ENCODE measurements at regions of chr19 and their contacts with region 1.

Region 1: DNA sequence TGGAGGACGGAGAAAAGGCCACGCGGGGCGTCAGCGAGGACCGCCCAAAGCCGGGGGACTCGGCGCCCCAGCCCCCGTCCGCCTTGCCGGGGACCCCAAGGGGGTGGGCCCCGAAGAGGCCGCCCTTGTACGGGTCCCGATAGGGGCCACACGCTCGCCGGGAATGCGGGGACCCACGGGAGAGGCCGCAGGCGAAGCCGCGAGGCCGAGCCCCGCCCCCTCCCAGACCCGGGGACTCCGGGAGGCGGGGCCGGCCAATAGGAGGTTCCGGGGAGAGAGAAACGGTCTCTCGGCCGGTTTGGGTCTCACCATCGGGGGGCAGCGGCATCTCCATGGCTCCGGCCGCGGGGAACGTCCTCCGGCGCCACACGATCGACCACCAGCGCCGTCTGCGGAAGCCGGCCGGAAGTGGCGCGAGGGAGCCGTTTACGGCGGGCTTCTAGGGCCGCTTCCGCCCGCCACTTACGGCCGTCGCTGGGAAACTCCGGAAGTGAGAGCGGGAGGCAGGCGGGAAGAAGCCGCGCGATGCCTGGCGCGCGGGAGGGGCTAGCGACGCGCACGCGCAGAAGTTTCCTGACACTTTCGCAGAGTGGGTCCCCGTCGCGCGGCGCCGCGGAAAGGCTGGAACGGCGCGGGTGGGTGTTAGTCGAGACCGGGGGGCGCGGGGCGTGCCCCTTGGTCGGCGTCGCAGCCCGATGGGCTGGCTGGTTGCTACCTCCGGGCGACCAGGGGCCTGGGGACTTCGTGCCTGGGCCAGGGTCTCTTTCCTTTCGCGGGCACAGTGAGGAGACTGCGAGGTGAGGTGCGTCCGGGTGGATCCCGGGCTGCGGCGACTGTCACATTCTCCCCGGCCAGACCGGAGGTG is at the start of gene CHERP:
- H3K4me3 Mint-ChIP-seq: peak within 1 kb of the TSS; percentile 82
- H3K27ac Mint-ChIP-seq: peak within 1 kb of the TSS; percentile 80
- H3K4me1 Mint-ChIP-seq: peaks cover 52% of the 10 kb centered on the region
- H3K27me3 Mint-ChIP-seq: no peaks in the 10 kb centered on the region

Region 2: GRCh38 chr19:16446724-16447368 is 95.4 kb before region 1 on chr19:
- intact Hi-C with region 1: loop called (anchors 10 kb)
- H3K4me3 Mint-ChIP-seq: peak overlapping the region; percentile 13
- H3K27ac Mint-ChIP-seq: peak overlapping the region; percentile 84
- H3K4me1 Mint-ChIP-seq: peaks cover 85% of the 10 kb centered on the region
- H3K27me3 Mint-ChIP-seq: no peaks in the 10 kb centered on the region

Region 3: DNA sequence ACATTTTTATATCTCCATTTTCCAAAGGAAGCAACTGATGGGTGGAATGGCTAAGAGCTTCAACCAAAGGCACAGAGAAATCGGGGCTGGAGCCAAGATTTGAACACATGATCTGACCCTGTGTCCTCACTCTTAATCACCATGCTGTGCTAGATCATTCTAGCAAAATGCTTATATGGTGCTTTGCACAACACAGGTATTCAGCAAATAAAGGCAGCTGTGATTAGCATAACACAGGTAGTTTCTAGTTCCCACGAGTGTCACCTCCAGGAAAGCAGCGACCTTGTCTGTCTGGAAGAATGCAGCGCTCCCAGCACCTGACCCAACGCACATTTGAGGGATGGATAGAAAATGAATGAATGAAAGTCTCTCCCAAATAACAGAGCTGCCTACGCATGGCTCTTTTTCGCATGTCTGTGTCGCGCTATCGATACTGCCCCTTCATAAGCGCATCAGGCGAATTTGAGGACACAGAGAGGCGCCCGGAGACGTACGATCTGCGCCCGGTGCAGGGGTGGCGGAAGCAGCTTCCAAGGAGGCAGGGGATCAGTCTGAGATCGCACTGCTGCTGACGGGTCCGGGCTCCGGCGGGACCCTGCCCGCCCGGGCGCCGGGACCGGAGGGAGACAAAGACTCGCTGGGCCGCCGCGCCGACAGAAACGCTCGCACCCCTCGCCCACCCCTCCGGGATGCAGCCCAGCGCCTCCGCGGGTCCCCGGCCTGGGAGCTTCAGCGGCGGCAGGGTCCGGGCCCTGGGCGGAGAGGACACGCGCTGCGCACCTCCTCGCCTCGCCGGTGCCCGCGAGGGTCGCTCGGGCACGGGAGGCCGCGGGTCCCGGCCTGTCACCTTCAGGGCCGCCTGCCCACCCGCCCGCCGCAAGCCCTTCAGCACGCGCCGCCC is 71.1 kb before region 1 on chr19:
- intact Hi-C with region 1: loop called (anchors 2 kb)
- H3K4me3 Mint-ChIP-seq: peak overlapping the region; percentile 80
- H3K27ac Mint-ChIP-seq: peak overlapping the region; percentile 69
- H3K4me1 Mint-ChIP-seq: peaks cover 41% of the 10 kb centered on the region
- H3K27me3 Mint-ChIP-seq: no peaks in the 10 kb centered on the region

Region 4: DNA sequence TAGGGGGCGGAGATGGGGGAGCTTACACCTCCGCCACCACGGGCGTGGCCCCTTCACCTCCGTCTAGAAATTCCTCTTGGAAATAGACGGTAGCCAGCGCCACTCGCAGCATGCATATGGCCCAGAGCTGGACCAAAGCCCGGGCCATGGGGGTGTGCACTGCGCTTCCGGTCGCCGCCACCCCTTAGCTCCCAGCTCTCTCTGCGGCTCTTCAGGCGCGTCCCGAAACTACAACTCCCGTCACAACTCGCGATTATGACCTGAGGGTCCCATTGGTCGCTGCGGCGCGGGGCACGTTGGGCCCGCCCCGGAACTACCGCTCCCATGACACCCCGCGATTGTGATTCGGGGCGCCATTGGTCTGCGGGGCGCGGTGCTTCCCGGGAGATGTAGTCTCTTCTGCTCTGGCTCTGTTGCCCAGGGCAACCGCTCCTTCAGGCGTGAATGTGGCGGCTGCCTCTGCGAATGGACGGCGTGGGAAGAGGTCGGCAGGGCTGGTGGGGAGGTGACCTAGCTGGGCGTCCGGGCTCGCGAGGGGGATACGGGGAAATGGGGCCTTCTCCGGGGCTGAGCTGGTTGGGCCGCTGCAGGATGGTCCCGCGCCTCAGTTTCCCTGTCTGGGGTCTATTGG is 46.2 kb before region 1 on chr19 and contains the starts of genes C19orf44 and CALR3:
- intact Hi-C with region 1: loop called (anchors 1 kb)
- H3K4me3 Mint-ChIP-seq: peak within 1 kb of the TSS; percentile 94
- H3K27ac Mint-ChIP-seq: peak within 1 kb of the TSS; percentile 81
- H3K4me1 Mint-ChIP-seq: peaks cover 20% of the 10 kb centered on the region
- H3K27me3 Mint-ChIP-seq: no peaks in the 10 kb centered on the region

Region 5: DNA sequence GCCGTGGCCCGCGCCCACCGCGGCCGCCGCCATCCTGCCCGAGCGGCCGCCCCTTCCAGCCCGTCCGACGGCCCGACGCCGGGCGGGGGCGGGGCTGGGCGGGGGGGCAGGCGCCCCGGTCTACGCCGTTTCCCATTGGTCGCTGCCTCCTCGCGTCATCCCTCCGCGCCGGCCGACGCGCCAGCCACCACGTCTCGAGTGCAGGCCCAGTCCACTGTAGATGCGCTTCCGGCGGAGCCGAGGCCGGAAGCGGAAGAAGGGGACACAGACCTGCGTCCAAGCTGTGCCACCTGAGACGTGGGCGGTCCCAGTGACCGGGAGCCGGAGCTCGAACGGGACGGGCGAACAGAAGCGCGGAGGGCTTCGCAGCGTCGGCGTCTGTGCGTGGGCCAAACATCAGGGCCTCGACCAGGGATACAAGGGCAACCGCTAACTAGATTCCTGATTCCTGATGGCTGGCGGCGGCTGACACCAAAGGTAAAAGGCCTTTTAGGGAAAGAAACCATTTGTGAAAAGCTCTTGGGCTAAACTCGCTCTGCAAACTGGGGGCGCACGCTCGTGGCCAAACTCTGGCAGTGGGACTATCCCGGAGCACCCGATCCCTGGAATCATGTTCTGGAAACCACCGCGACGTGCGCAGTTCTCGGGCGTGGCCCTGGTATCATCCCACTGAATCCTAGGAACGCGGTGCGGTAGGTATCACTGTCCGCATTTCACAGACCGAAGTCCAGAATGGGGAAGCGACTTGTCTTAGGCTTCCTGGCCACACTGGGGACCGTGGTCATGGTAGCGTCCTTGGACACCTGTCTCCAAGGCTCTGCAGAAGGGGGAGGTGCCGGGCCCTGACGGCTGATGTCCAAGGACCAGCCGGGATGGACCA is 30.3 kb after region 1 on chr19 and contains the start of gene SLC35E1:
- intact Hi-C with region 1: loop called (anchors 1 kb)
- H3K4me3 Mint-ChIP-seq: peak within 1 kb of the TSS; percentile 94
- H3K27ac Mint-ChIP-seq: peak within 1 kb of the TSS; percentile 93
- H3K4me1 Mint-ChIP-seq: peaks cover 52% of the 10 kb centered on the region
- H3K27me3 Mint-ChIP-seq: no peaks in the 10 kb centered on the region

Region 6: GRCh38 chr19:16584248-16585141 is 42.2 kb after region 1 on chr19:
- intact Hi-C with region 1: no loop called
- H3K4me3 Mint-ChIP-seq: peak overlapping the region; percentile 87
- H3K27ac Mint-ChIP-seq: peak overlapping the region; percentile 98
- H3K4me1 Mint-ChIP-seq: peaks cover 90% of the 10 kb centered on the region
- H3K27me3 Mint-ChIP-seq: no peaks in the 10 kb centered on the region

Region 7: DNA sequence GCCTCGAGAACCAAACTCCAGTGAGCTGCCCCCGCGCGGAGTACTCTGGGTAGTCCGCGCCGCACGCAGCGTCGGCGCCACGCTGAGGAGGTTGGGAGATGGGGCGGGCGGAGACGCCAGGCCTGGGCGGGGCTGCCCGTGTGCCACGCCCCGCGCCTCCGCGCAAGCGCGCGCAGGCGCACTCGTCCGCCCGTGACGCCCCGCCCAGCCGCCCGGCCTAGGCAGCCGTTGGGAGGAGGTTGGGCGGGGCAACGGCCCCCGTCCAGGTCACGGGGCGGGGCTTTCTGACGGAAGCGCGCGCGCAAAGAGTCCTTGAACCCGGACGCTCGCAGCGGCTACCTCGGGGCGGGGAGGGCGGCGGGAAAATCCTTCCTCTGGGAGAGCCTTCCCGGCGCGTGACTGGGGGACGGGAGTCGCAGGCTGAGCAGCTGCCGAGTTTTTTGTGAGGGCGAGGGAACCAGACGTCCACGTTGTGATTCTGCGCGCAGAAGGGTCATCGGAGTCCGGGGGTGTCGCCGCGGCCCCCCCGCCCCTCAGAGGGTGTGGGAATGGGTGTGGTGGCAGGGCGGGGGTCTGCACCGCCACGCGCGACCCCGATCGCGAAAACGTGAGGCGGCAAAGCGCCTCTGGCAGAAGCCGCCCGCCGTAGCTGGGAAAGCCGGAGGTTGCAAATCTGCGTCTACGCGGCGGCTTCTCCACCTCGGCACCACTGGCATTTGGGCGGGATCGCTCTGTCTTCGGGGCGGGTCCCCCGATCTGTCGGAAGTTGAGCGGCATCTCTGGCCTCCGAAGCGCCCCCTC is 86.1 kb after region 1 on chr19 and contains the start of gene MED26:
- intact Hi-C with region 1: loop called (anchors 1 kb)
- H3K4me3 Mint-ChIP-seq: peak within 1 kb of the TSS; percentile 99
- H3K27ac Mint-ChIP-seq: peak within 1 kb of the TSS; percentile 97
- H3K4me1 Mint-ChIP-seq: peaks cover 44% of the 10 kb centered on the region
- H3K27me3 Mint-ChIP-seq: no peaks in the 10 kb centered on the region

Region 8: DNA sequence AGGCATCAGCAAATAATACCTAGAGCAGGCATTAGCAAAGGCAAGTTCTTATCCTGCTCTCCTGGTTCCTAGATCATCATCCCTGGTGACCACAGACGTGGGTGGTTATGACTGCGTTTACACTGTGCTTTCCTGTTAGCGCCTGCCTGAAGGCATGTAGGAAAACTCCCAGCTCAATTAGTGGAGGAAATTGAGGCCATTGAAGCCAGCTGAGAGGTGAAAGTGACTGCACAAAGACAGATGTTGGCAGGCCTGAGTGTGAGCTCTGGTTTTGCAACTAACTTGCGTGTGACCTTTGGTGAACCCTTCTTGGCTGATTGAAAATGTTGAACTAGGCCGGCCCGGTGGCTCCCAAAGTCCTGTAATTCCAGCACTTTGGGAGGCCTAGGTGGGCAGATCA is 159.8 kb after region 1 on chr19:
- intact Hi-C with region 1: no loop called
- H3K4me3 Mint-ChIP-seq: no peak overlapping the region
- H3K27ac Mint-ChIP-seq: no peak overlapping the region
- H3K4me1 Mint-ChIP-seq: no peaks in the 10 kb centered on the region
- H3K27me3 Mint-ChIP-seq: peaks cover 15% of the 10 kb centered on the region

Measured in dendritic cell treated with granulocyte-macrophage colony-stimulating factor and Interleukin-4, amounts not matched to agents 40 ng/mL and 50 ng/mL, for 4 days (primary cell).